ENCODE measurements at regions of chr13 and their contacts with region 1.

Region 1: DNA sequence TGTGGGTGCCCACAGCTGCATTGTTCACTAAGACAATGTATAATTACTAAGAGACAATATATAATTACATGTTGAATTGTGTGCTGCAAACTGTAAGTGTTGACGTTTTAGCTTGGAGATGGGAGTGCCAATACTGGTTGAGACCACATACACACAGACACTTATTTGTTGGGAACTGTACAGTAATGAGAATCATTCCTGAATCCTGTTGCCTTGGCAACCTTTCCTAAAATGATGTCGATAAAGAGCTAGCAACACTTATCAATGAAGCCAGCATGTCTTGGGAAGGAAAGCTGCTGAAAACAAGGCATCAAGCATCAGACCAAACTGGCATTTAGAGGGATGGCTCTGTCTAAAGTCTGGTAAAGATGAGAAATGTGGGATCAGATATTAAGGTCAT is 51.3 kb downstream of the PCDH8 start:
- DNase-seq: no peak
- H3K4me3 ChIP-seq: no peak overlapping the region
- H3K27ac ChIP-seq: no peak overlapping the region
- H3K4me1 ChIP-seq: no peaks in the 10 kb centered on the region
- H3K27me3 ChIP-seq: peaks cover 0 to 9% (median 2%) of the 10 kb centered on the region in 5 experiments

Region 2: GRCh38 chr13:52809310-52809769 is 12.2 kb after region 1 on chr13:
- CTCF ChIA-PET with region 1: interaction called, 21 read pairs
- POLR2A ChIA-PET with region 1: no interaction called
- DNase-seq: peak; percentile 95 to 97 (median 95)
- H3K4me3 ChIP-seq: peak overlapping the region in 1 of 7 experiments; percentile 2
- H3K27ac ChIP-seq: no peak overlapping the region
- H3K4me1 ChIP-seq: peaks cover 5 to 14% (median 8%) of the 10 kb centered on the region in 4 experiments
- H3K27me3 ChIP-seq: no peaks in the 10 kb centered on the region

Region 3: GRCh38 chr13:52911340-52911739 is 114.2 kb after region 1 on chr13:
- CTCF ChIA-PET with region 1: no interaction called
- POLR2A ChIA-PET with region 1: no interaction called
- DNase-seq: no peak
- H3K4me3 ChIP-seq: no peak overlapping the region
- H3K27ac ChIP-seq: no peak overlapping the region
- H3K4me1 ChIP-seq: no peaks in the 10 kb centered on the region
- H3K27me3 ChIP-seq: peaks cover 0 to 10% (median 3%) of the 10 kb centered on the region in 5 experiments

Region 4: GRCh38 chr13:53112525-53112924 is 315.3 kb after region 1 on chr13:
- CTCF ChIA-PET with region 1: no interaction called
- POLR2A ChIA-PET with region 1: no interaction called
- DNase-seq: no peak
- H3K4me3 ChIP-seq: no peak overlapping the region
- H3K27ac ChIP-seq: no peak overlapping the region
- H3K4me1 ChIP-seq: no peaks in the 10 kb centered on the region
- H3K27me3 ChIP-seq: no peaks in the 10 kb centered on the region

Measured in common myeloid progenitor, CD34-positive (primary cell).